Activated T-helper 2 cell treated with anti-CD3 and anti-CD28 coated beads, Interferon-gamma antibody, Interleukin-2, Interleukin-4, amounts not matched to agents 10 μg/mL and 5 μg/mL and 100 μg/mL, durations not matched to agents 14 hours and 24 hours and 36 hours (primary cell): ENCODE measurements at regions of chr19 and their contacts with region 1.

Region 1: GRCh38 chr19:14517840-14518505 is at the start of gene DNAJB1:
- DNase-seq: no peak
- H3K4me3 Mint-ChIP-seq: peak within 1 kb of the TSS; percentile 88
- H3K27ac Mint-ChIP-seq: peak within 1 kb of the TSS; percentile 94
- H3K4me1 Mint-ChIP-seq: peaks cover 52% of the 10 kb centered on the region
- H3K27me3 Mint-ChIP-seq: no peaks in the 10 kb centered on the region
- total RNA-seq, gene DNAJB1: 113 TPM in 2 replicates

Region 2: DNA sequence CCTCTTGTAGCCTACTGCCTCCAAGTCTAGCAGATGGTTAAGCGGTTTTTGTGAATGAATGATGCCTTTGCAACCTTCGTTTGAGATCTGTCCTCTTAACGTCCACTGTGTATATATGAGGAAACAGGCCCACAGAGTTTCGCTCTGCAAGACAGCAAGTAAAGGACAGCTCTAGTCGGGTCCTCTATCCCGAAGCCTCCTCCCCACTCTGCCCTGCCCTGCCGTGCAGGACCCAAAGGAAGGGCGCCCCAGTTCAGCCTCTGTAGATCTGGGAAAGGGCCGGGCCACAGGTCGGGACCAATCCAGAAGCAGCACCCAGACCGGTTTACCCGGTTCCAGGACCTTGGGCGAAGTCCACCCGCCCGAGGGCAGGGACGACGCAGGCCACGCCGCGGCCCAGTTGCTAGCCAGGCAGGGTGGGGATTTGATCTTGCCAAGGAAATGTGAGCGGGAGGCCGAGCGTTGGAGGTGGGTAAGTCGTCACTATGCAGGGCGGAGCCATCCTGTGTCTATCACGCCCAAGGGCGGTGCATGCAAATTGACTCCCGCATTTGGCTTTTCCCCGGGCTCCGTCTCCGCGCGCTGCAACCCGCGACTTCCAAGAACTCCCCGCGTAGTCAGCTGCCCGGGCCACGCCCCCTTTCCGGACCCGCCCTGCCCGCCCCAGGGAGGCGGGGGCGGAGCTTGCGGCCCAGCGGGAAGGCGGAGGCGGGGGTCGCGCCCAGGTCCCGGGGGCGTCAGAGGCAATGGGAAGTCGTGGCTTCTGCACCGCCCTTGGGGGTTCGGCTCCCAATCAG is 1355.3 kb before region 1 on chr19:
- intact Hi-C with region 1: loop called (anchors 10 kb)
- DNase-seq: peak; percentile 89
- H3K4me3 Mint-ChIP-seq: peak overlapping the region; percentile 86
- H3K27ac Mint-ChIP-seq: peak overlapping the region; percentile 95
- H3K4me1 Mint-ChIP-seq: peaks cover 47% of the 10 kb centered on the region
- H3K27me3 Mint-ChIP-seq: no peaks in the 10 kb centered on the region

Region 3: DNA sequence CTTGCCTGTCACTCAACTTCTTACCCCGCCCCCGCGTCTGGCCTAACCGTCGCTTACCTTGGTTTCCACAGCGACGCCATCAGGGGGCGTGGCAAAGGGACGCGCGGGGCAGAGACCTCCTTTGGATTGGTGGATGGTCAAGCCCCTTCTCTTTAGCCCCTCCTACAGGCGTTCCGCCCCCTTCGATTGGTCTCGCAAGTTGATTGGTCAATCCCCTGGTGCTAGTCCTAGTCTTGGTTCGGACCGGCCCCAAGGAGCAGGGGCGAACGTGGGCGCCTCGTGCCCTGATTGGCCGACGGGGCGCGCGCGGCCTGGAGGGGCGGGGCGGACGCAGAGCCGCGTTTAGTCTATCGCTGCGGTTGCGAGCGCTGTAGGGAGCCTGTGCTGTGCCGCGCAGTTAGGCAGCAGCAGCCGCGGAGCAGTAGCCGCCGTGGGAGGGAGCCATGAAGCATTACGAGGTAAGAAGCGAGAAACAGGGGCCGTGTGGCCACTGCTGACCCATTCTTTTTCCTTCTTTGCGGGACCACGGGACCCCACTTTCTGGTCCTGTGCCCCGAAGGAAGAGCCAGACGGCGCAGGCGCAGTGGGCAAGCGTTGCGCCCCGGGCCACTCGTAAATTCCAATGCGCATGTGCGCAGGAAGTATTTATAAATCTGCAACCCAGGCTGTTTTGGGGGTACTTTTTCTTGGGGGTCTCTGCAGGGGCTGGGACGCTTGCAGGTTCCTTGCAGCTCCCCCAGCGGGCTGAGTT is 11.5 kb after region 1 on chr19 and contains the start of gene TECR:
- intact Hi-C with region 1: loop called (anchors 1 kb)
- DNase-seq: peak; percentile 100
- H3K4me3 Mint-ChIP-seq: peak within 1 kb of the TSS; percentile 95
- H3K27ac Mint-ChIP-seq: peak within 1 kb of the TSS; percentile 97
- H3K4me1 Mint-ChIP-seq: peaks cover 17% of the 10 kb centered on the region
- H3K27me3 Mint-ChIP-seq: no peaks in the 10 kb centered on the region
- total RNA-seq, gene TECR: 128 and 134 TPM in 2 replicates